ENCODE measurements at regions of chr9 and their contacts with region 1.

Region 1: DNA sequence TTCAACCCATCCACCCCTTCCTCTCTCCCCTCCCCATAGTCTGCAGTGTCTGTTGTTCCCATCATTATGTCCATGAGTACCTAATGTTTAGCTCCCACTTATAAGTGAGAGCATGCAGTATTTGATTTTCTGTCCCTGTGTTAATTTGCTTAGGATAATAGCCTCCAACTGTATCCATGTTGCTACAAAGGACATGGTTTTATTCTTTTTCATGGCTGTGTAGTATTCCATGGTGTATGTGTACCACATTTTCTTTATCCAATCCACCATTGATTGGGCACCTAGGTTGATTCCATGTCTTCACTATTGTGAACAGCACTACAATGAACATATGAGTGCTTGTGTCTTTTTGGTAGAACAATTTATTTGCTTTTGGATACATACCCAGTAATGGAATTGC is 187.1 kb downstream of the PCSK5 start:
- DNase-seq: no peak
- ATAC-seq: no peak
- H3K4me3 ChIP-seq: no peak overlapping the region
- H3K27ac ChIP-seq: no peak overlapping the region
- H3K4me1 ChIP-seq: peaks cover 0 to 7% (median 0%) of the 10 kb centered on the region in 9 donors
- H3K27me3 ChIP-seq: no peaks in the 10 kb centered on the region
- CTCF ChIP-seq: no peak

Region 2: GRCh38 chr9:76018235-76018634 is 59.3 kb before region 1 on chr9:
- intact Hi-C with region 1: loop called in 1 of 10 experiments (anchors 10 kb)
- DNase-seq: no peak
- ATAC-seq: no peak
- H3K4me3 ChIP-seq: no peak overlapping the region
- H3K27ac ChIP-seq: no peak overlapping the region
- H3K4me1 ChIP-seq: no peaks in the 10 kb centered on the region
- H3K27me3 ChIP-seq: no peaks in the 10 kb centered on the region
- CTCF ChIP-seq: no peak

Region 3: DNA sequence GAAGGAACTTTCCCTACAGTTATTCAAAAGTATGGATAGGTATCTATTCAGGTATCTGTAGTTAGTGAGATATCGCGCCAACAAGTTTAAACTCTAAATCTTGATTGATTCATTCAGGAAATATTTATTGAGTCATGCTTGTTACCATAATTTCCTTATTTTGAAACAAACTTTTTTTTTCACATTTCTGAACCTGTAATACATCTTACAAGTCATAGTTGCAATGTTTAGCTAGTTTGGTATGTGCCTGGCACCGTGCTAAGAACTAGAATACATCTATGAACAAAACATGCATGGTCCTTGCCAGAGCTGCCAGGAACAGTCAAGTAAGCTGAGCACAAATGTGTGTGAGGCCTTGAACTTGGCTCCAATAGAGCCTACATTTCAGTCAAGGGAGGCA is 39.4 kb after region 1 on chr9:
- intact Hi-C with region 1: no loop called
- DNase-seq: no peak
- ATAC-seq: peak in 1 of 8 donors; percentile 31
- H3K4me3 ChIP-seq: no peak overlapping the region
- H3K27ac ChIP-seq: no peak overlapping the region
- H3K4me1 ChIP-seq: peaks cover 0 to 10% (median 0%) of the 10 kb centered on the region in 9 donors
- H3K27me3 ChIP-seq: no peaks in the 10 kb centered on the region
- CTCF ChIP-seq: no peak